Transverse colon (tissue), 4 donors: ENCODE measurements at regions of chr4 and their contacts with region 1.

Region 1: GRCh38 chr4:133647206-133647605 is 498.1 kb downstream of the PCDH10 start:
- DNase-seq: no peak
- H3K4me3 ChIP-seq: no peak overlapping the region
- H3K27ac ChIP-seq: no peak overlapping the region
- H3K4me1 ChIP-seq: no peaks in the 10 kb centered on the region
- H3K27me3 ChIP-seq: no peaks in the 10 kb centered on the region
- CTCF ChIP-seq: no peak
- EP300 ChIP-seq: no peak
- POLR2A ChIP-seq: no peak

Region 2: DNA sequence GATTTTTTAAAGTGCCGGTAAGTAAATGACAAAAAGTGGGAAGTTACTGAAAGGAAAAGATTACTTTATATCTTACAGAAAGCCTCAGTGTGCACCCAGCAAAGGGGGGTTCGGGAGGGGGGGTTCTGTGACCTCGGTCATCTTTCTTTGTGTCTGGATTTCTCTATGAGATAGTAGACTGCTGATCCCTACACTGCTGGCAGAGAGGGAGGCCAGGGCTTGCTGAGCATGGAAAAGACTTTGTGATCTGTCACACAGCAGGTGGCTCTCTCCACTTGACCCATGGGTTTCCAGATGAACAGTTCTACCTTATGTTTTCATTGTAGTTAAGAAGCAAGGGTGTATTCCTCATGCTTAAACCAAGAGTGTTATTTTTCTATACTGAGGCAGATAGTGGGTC is 22.5 kb before region 1 on chr4:
- in situ Hi-C with region 1: no loop called
- intact Hi-C with region 1: loop called (anchors 2 kb)
- DNase-seq: no peak
- H3K4me3 ChIP-seq: no peak overlapping the region
- H3K27ac ChIP-seq: no peak overlapping the region
- H3K4me1 ChIP-seq: no peaks in the 10 kb centered on the region
- H3K27me3 ChIP-seq: no peaks in the 10 kb centered on the region
- CTCF ChIP-seq: no peak
- EP300 ChIP-seq: no peak
- POLR2A ChIP-seq: no peak

Region 3: DNA sequence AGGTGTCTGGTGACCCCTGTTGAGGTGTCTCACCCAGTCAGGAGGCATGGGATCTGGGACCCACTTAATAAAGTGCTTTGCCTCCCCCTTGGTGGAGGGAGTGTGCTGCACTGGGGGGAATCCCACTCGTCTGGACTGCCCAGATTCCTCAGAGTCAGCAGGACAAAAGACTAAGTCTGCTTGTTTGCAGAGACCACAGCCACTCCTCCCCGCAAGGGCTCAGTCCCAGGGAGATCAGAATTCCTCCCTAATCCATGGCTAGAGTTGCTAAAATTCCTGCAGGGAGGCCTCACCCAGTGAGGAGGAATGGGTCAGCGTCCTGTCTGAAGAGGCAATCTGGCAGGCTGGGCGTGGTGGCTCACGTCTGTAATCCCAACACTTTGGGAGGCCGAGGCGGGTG is 112.2 kb after region 1 on chr4:
- in situ Hi-C with region 1: no loop called
- intact Hi-C with region 1: no loop called
- DNase-seq: no peak
- H3K4me3 ChIP-seq: no peak overlapping the region
- H3K27ac ChIP-seq: no peak overlapping the region
- H3K4me1 ChIP-seq: no peaks in the 10 kb centered on the region
- H3K27me3 ChIP-seq: no peaks in the 10 kb centered on the region
- CTCF ChIP-seq: no peak
- EP300 ChIP-seq: no peak
- POLR2A ChIP-seq: no peak